ENCODE measurements at regions of chr5 and their contacts with region 1.

Region 1: GRCh38 chr5:43073597-43074546 is 33.8 kb upstream of the ANXA2R start:
- DNase-seq: peak; percentile 69 to 74
- H3K4me3 ChIP-seq: no peak overlapping the region
- H3K4me3 Mint-ChIP-seq: no peak overlapping the region
- H3K27ac Mint-ChIP-seq: peak overlapping the region; percentile 61
- H3K4me1 ChIP-seq: peaks cover 36% of the 10 kb centered on the region
- H3K4me1 Mint-ChIP-seq: peaks cover 43% of the 10 kb centered on the region
- H3K27me3 ChIP-seq: no peaks in the 10 kb centered on the region
- H3K27me3 Mint-ChIP-seq: no peaks in the 10 kb centered on the region
- CTCF ChIP-seq: peak; percentile 53 to 79

Region 2: DNA sequence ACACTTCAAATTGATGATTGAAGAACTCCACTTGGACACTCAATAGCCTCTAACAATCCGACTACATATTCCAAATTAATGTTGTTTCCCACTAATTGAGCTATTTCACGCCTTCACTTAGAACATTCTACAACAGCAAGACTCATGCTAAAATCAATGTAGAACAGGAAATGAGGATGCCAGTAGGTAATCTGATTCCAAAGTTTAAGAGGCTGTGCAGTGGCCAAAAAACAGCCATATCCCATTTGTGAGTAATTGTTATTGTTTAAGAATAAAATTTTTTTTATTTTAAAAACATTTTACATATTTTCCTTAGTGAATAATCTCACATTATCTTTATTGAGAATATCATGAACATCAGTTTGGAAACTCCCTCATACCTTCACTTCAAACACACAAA is 686.3 kb before region 1 on chr5:
- CTCF ChIA-PET with region 1: no interaction called
- POLR2A ChIA-PET with region 1: no interaction called
- intact Hi-C with region 1: no loop called
- DNase-seq: no peak
- H3K4me3 ChIP-seq: no peak overlapping the region
- H3K4me3 Mint-ChIP-seq: no peak overlapping the region
- H3K27ac Mint-ChIP-seq: no peak overlapping the region
- H3K4me1 ChIP-seq: peaks cover 6% of the 10 kb centered on the region; the same call in 1 of the 2 replicates
- H3K4me1 Mint-ChIP-seq: peaks cover 15% of the 10 kb centered on the region
- H3K27me3 ChIP-seq: no peaks in the 10 kb centered on the region
- H3K27me3 Mint-ChIP-seq: no peaks in the 10 kb centered on the region
- CTCF ChIP-seq: no peak

Region 3: GRCh38 chr5:43105369-43106289 is 31.8 kb after region 1 on chr5:
- CTCF ChIA-PET with region 1: no interaction called
- POLR2A ChIA-PET with region 1: no interaction called
- intact Hi-C with region 1: loop called (anchors 1 kb)
- DNase-seq: peak; percentile 93
- H3K4me3 ChIP-seq: peak overlapping the region; percentile 21
- H3K4me3 Mint-ChIP-seq: peak overlapping the region; percentile 68
- H3K27ac Mint-ChIP-seq: peak overlapping the region; percentile 49
- H3K4me1 ChIP-seq: peaks cover 8% of the 10 kb centered on the region; the same call in 1 of the 2 replicates
- H3K4me1 Mint-ChIP-seq: peaks cover 8% of the 10 kb centered on the region
- H3K27me3 ChIP-seq: no peaks in the 10 kb centered on the region
- H3K27me3 Mint-ChIP-seq: no peaks in the 10 kb centered on the region
- CTCF ChIP-seq: peak; percentile 99 to 100

Region 4: GRCh38 chr5:43191740-43192557 is 118.1 kb after region 1 on chr5 and contains the start of gene NIM1K:
- CTCF ChIA-PET with region 1: no interaction called
- POLR2A ChIA-PET with region 1: no interaction called
- intact Hi-C with region 1: loop called (anchors 10 kb)
- DNase-seq: peak; percentile 75 to 81
- H3K4me3 ChIP-seq: peak within 1 kb of the TSS; percentile 60
- H3K4me3 Mint-ChIP-seq: peak within 1 kb of the TSS; percentile 76
- H3K27ac Mint-ChIP-seq: no peak within 1 kb of the TSS
- H3K4me1 ChIP-seq: 0 out of 2 replicates have a peak, but pooled peaks cover 4% of the 10 kb centered on the region
- H3K4me1 Mint-ChIP-seq: peaks cover 5% of the 10 kb centered on the region
- H3K27me3 ChIP-seq: no peaks in the 10 kb centered on the region
- H3K27me3 Mint-ChIP-seq: no peaks in the 10 kb centered on the region
- CTCF ChIP-seq: no peak
- total RNA-seq, gene NIM1K: 0.14 TPM in 1 of 2 replicates, not detected in the other

Region 5: GRCh38 chr5:43305948-43306565 is 232.2 kb after region 1 on chr5:
- CTCF ChIA-PET with region 1: no interaction called
- POLR2A ChIA-PET with region 1: no interaction called
- intact Hi-C with region 1: loop called (anchors 1 kb)
- DNase-seq: peak in 1 of 2 experiments; percentile 55
- H3K4me3 ChIP-seq: no peak overlapping the region
- H3K4me3 Mint-ChIP-seq: no peak overlapping the region
- H3K27ac Mint-ChIP-seq: no peak overlapping the region
- H3K4me1 ChIP-seq: peaks cover 31% of the 10 kb centered on the region
- H3K4me1 Mint-ChIP-seq: peaks cover 25% of the 10 kb centered on the region
- H3K27me3 ChIP-seq: no peaks in the 10 kb centered on the region
- H3K27me3 Mint-ChIP-seq: no peaks in the 10 kb centered on the region
- CTCF ChIP-seq: peak; percentile 66 to 74

Region 6: GRCh38 chr5:43348207-43348606 is 274.3 kb after region 1 on chr5:
- CTCF ChIA-PET with region 1: no interaction called
- POLR2A ChIA-PET with region 1: no interaction called
- intact Hi-C with region 1: loop called (anchors 1 kb)
- DNase-seq: peak; percentile 84 to 92
- H3K4me3 ChIP-seq: no peak overlapping the region
- H3K4me3 Mint-ChIP-seq: peak overlapping the region; percentile 49
- H3K27ac Mint-ChIP-seq: peak overlapping the region; percentile 65
- H3K4me1 ChIP-seq: peaks cover 45% of the 10 kb centered on the region
- H3K4me1 Mint-ChIP-seq: peaks cover 35% of the 10 kb centered on the region
- H3K27me3 ChIP-seq: no peaks in the 10 kb centered on the region
- H3K27me3 Mint-ChIP-seq: no peaks in the 10 kb centered on the region
- CTCF ChIP-seq: no peak

Measured in Caco-2 (cell line).